PC-9 (cell line): ENCODE measurements at regions of chr9 and their contacts with region 1.

Region 1: GRCh38 chr9:87336914-87337333 is 160.7 kb upstream of the DAPK1 start:
- DNase-seq: peak; percentile 38 to 75
- H3K4me3 ChIP-seq: peak overlapping the region; percentile 52
- H3K27ac ChIP-seq: peak overlapping the region; percentile 20; the same call in 1 of the 2 replicates
- H3K4me1 ChIP-seq: peaks cover 13% of the 10 kb centered on the region
- H3K27me3 ChIP-seq: no peaks in the 10 kb centered on the region
- CTCF ChIP-seq: peak; percentile 94

Region 2: DNA sequence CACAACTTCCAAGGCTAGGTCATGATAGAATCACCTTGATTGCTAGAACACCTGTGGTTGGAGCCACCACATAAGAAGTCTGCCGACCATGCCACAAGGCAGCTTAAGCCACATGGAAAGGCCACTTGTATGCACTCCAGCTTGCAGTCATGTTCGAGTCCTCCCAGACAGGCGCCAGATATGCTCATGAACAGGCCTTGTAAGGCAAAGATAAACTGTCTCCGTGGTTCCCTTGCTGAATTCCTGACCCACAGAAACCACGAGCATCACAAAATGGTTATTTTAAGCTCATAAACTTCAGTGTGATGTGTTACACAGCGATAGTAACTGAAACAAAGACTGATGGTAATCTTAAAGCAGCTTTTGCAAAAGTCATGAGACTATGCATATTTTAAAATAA is 27.7 kb before region 1 on chr9:
- CTCF ChIA-PET with region 1: no interaction called
- POLR2A ChIA-PET with region 1: no interaction called
- intact Hi-C with region 1: no loop called
- DNase-seq: no peak
- H3K4me3 ChIP-seq: no peak overlapping the region
- H3K27ac ChIP-seq: no peak overlapping the region
- H3K4me1 ChIP-seq: no peaks in the 10 kb centered on the region
- H3K27me3 ChIP-seq: no peaks in the 10 kb centered on the region
- CTCF ChIP-seq: no peak

Region 3: GRCh38 chr9:87375397-87376073 is 38.6 kb after region 1 on chr9:
- CTCF ChIA-PET with region 1: interaction called, 8 read pairs
- POLR2A ChIA-PET with region 1: no interaction called
- intact Hi-C with region 1: loop called (anchors 1 kb)
- DNase-seq: peak; percentile 65 to 75
- H3K4me3 ChIP-seq: no peak overlapping the region
- H3K27ac ChIP-seq: peak overlapping the region; percentile 66
- H3K4me1 ChIP-seq: peaks cover 48% of the 10 kb centered on the region
- H3K27me3 ChIP-seq: no peaks in the 10 kb centered on the region
- CTCF ChIP-seq: no peak

Region 4: DNA sequence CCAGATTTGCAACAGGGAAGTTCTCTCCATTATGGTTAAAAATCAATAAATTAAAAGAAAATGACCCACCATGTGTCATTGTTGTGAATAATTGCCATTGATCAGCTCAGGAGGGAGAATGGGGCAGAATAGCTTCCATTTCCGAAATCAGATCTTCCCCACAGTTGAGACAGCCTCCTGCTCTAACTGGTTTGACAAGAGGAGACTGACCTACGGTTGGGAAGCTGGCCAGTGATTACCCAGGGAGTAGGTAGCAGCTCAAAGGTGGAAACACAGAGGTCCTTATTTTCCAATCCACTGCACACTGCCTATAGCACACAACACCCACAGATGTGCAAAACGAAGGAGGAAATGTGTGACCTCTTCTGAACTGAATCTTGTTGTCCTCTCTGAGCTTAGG is 91.7 kb after region 1 on chr9:
- CTCF ChIA-PET with region 1: no interaction called
- POLR2A ChIA-PET with region 1: interaction called, 4 read pairs
- intact Hi-C with region 1: loop called (anchors 2 kb)
- DNase-seq: peak; percentile 71 to 93
- H3K4me3 ChIP-seq: peak overlapping the region; percentile 41; the same call in 1 of the 2 replicates
- H3K27ac ChIP-seq: peak overlapping the region; percentile 88
- H3K4me1 ChIP-seq: peaks cover 31% of the 10 kb centered on the region
- H3K27me3 ChIP-seq: no peaks in the 10 kb centered on the region
- CTCF ChIP-seq: no peak

Region 5: DNA sequence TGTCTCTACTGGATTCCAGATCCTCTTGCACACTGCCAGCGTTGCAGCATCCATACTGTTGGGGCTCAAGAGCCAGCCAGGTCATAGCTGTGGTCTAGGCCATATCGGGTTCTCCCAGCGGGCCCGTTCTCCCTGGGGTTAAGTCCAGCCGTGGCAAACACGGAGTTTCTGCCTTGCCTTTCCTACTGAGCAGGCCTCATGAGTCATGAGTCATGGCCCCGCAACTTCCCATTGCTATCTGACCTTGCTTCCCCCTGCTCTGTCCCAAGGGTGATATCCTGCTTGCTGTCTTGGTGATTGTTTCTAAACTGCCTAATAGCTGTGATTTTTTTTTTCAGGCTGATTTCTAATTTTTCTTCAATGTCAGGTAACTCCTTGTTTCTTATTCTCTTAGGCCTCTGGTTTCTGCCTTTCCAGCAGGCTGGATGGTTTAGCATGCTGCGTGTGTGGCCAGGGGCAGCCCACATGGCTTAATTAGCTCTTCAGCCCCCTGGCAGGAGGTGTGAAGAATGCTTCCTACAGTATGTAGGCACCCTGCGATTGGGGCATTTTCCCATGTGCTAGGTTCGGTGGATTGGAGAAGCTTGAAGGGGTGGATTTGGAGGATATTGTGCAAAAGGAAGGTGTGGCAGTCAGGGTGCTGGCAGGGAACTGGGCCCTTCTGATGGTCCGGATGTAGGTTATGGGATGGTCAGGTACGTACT is 179.4 kb after region 1 on chr9:
- CTCF ChIA-PET with region 1: no interaction called
- POLR2A ChIA-PET with region 1: interaction called, 3 read pairs
- intact Hi-C with region 1: loop called (anchors 5 kb)
- DNase-seq: peak; percentile 57 to 75
- H3K4me3 ChIP-seq: no peak overlapping the region
- H3K27ac ChIP-seq: peak overlapping the region; percentile 39
- H3K4me1 ChIP-seq: peaks cover 27% of the 10 kb centered on the region
- H3K27me3 ChIP-seq: no peaks in the 10 kb centered on the region
- CTCF ChIP-seq: no peak

Region 6: DNA sequence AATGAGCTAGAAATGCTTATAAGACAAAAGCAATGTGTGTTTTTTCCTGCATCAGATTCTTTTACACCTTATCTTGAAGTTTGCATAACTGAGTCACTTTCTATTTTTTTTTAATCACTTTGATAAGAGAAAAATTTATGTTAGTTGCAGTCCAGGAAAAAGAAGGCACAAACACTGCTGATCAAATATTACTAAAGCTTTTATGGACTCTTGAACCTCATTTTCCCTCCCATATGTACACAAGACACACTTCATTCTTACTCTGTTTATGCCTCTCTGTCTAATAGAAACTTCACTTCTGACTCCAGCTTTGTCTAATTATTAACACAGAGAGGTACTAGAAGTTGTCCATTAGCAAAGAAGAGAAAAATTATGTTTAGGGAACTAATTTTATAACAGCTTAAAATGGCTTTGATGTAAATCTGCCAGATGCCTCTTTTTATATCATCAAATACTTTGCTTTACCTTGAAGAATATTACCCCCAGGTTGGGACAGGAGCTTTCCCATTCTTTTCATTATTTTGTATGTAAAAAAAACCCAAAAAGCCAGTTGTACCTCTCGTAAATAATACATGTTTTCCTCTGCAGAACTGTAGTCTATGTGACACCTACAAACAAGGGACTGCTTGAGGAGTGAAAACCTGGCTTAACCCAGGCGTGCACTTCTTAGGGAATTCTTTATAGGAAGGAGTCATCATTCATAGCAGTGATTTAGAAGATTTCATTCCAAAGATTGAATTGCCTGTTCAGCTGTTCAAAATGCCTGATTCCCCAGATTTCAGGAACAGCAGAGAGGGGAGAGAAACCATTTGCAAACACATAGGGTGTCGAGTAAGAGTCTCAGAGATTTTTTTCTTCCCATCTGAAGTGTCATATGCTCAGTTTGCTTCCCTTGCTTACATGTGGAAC is 233.3 kb after region 1 on chr9:
- CTCF ChIA-PET with region 1: no interaction called
- POLR2A ChIA-PET with region 1: no interaction called
- intact Hi-C with region 1: loop called (anchors 1 kb)
- DNase-seq: peak in 1 of 2 experiments; percentile 58
- H3K4me3 ChIP-seq: no peak overlapping the region
- H3K27ac ChIP-seq: peak overlapping the region; percentile 65
- H3K4me1 ChIP-seq: peaks cover 39% of the 10 kb centered on the region
- H3K27me3 ChIP-seq: no peaks in the 10 kb centered on the region
- CTCF ChIP-seq: no peak

Region 7: DNA sequence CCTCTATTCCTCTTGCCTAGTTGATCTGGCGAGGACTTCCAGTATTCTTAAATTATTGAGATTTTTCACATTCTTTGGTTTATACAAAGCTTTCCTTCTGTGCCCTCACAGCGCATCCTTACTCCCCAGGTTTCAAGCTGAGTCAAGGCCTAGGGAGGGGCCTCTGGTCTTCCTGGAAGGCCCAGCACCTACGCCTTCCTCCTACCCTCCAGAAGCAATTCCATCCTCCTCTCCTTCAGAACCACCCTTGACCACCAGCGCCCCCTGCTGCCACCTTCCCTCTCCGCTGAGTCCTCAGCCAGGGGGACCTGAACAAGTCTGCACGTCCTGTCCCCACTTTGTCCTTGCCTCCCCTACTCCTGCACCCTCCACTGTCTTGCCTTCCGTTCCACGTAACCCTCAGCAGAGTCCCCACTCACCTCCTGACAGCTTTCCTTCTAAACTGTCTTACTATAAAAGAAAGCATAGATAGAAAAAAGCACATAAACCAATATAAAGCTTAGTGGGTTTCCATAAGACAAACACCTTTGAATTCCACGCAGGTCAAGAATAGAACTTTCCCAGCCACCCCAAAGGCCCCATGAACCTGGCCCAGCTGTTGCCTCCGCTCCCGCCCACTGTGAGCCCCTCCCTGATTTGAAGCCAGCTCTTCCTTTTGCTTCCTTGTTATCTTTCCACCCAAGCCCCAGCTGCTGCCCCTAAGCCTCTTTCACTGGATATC is 326.0 kb after region 1 on chr9:
- CTCF ChIA-PET with region 1: interaction called, 6 read pairs
- POLR2A ChIA-PET with region 1: no interaction called
- intact Hi-C with region 1: loop called (anchors 1 kb)
- DNase-seq: peak; percentile 78 to 92
- H3K4me3 ChIP-seq: no peak overlapping the region
- H3K27ac ChIP-seq: no peak overlapping the region
- H3K4me1 ChIP-seq: peaks cover 4% of the 10 kb centered on the region; the same call in 1 of the 2 replicates
- H3K27me3 ChIP-seq: no peaks in the 10 kb centered on the region
- CTCF ChIP-seq: peak; percentile 83